ENCODE measurements at regions of chr12 and their contacts with region 1.

Region 1: GRCh38 chr12:124767066-124767821 is 96.4 kb downstream of the SCARB1 start:
- DNase-seq: peak; percentile 53
- ATAC-seq: peak; percentile 64
- H3K4me3 ChIP-seq: no peak overlapping the region
- H3K27ac ChIP-seq: peak overlapping the region; percentile 14; the same call in 1 of the 2 replicates
- H3K4me1 ChIP-seq: peaks cover 29% of the 10 kb centered on the region
- H3K27me3 ChIP-seq: no peaks in the 10 kb centered on the region
- CTCF ChIP-seq: peak; percentile 92
- POLR2A ChIP-seq: no peak
- RAD21 ChIP-seq: peak; percentile 96

Region 2: DNA sequence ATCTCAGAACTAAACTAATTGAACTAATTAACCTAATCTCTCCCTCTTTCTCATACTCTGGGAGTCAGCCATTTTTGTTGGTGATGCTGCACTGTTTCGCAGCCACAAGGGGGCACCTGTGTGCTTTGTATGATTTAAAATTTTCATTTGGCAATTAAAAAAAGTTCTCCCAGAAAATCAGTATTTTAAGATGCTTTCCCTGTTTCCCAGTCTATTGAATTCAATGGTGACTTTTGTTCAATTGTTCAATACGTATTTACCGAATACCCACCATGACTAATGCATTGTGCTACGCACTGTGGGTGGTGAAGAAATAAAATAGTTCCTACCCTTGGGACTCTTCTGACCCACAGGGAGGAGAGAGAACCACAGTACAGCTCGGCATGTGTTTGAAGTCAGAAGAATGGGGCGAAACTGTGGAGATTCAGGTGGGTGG is 730.6 kb before region 1 on chr12:
- CTCF ChIA-PET with region 1: interaction called, 7 read pairs
- POLR2A ChIA-PET with region 1: no interaction called
- dilution Hi-C with region 1: no loop called
- in situ Hi-C with region 1: loop called (anchors 5 kb)
- intact Hi-C with region 1: loop called (anchors 1 kb)
- DNase-seq: peak; percentile 44
- ATAC-seq: peak; percentile 62
- H3K4me3 ChIP-seq: no peak overlapping the region
- H3K27ac ChIP-seq: no peak overlapping the region
- H3K4me1 ChIP-seq: no peaks in the 10 kb centered on the region
- H3K27me3 ChIP-seq: no peaks in the 10 kb centered on the region
- CTCF ChIP-seq: peak; percentile 96
- POLR2A ChIP-seq: no peak
- RAD21 ChIP-seq: peak; percentile 90

Region 3: GRCh38 chr12:124369055-124369900 is 398.0 kb before region 1 on chr12:
- CTCF ChIA-PET with region 1: no interaction called
- POLR2A ChIA-PET with region 1: no interaction called
- dilution Hi-C with region 1: no loop called
- in situ Hi-C with region 1: no loop called
- intact Hi-C with region 1: loop called (anchors 2 kb)
- DNase-seq: peak; percentile 92
- ATAC-seq: peak; percentile 92
- H3K4me3 ChIP-seq: no peak overlapping the region
- H3K27ac ChIP-seq: peak overlapping the region; percentile 90
- H3K4me1 ChIP-seq: peaks cover 21% of the 10 kb centered on the region
- H3K27me3 ChIP-seq: no peaks in the 10 kb centered on the region
- CTCF ChIP-seq: peak; percentile 57
- POLR2A ChIP-seq: no peak
- RAD21 ChIP-seq: peak; percentile 53

Region 4: DNA sequence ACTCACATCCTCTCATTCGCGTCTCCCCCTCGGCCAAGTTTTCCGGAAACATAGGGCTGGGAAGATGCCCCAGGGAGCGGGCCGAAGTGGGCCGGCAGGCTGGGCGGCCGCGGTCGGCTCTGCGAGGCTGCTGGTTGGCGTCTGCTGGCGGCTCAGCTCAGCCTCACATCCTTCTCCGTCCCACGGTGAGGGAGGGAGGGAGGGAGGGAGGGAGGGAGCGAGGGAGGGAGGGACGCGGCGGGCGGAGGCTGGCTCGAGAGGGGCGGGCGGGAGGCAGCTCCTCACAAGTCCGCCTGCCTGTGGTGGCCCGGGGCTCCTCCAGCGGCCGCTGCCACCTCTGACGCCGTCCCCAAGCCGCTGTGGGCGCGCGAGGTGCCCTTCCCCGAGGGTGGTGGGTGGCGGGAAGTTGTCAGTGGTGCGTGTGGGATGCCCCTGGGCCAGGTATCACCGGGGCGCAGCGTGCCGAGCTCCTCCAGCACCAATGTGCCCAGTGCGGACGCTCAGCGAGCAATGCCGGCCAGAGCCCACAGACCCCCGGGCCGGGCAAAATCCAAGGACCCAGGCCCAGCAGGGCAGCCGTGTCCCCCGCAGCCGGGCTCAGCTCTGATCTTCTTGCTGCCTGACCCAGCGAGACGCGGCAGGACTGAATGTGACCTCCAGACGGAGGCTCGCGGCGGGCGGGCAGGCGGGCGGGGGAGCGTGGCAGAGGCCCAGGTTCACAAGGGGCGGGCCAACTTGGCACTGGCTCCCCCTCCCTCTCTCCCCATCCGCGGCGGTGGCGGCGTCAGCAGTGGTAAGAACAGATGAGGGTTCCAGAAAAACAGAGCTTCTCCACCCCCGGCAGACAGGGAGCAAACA is 378.3 kb before region 1 on chr12:
- CTCF ChIA-PET with region 1: no interaction called
- POLR2A ChIA-PET with region 1: no interaction called
- dilution Hi-C with region 1: no loop called
- in situ Hi-C with region 1: loop called (anchors 5 kb)
- intact Hi-C with region 1: loop called (anchors 5 kb)
- DNase-seq: peak; percentile 85
- ATAC-seq: peak; percentile 65
- H3K4me3 ChIP-seq: peak overlapping the region; percentile 97
- H3K27ac ChIP-seq: peak overlapping the region; percentile 98
- H3K4me1 ChIP-seq: peaks cover 62% of the 10 kb centered on the region
- H3K27me3 ChIP-seq: no peaks in the 10 kb centered on the region
- CTCF ChIP-seq: no peak
- POLR2A ChIP-seq: peak; percentile 94
- RAD21 ChIP-seq: peak; percentile 9; the same call in 1 of the 2 replicates

Region 5: DNA sequence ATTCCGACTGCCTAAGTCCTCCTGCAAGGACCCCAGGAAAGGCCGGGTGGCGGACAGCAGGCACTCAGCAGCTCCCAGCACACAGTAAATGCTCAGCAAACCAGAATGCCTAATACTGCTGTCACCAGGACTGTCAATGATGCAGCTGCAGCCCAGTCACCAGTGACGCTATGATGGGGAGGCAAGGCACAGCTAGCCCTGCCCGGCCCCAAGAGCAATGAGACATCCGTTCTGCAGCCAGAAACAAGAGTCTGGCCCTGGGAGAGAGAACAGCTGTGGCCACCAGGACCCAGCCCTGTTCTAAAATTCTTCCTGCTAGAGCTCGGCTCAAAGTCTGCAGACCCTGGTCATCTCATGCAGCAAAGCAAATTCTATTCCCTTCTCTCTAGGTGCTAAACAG is 269.6 kb before region 1 on chr12:
- CTCF ChIA-PET with region 1: interaction called, 3 read pairs
- POLR2A ChIA-PET with region 1: no interaction called
- dilution Hi-C with region 1: no loop called
- in situ Hi-C with region 1: no loop called
- intact Hi-C with region 1: loop called (anchors 5 kb)
- DNase-seq: peak; percentile 96
- ATAC-seq: peak; percentile 80
- H3K4me3 ChIP-seq: no peak overlapping the region
- H3K27ac ChIP-seq: peak overlapping the region; percentile 75
- H3K4me1 ChIP-seq: peaks cover 34% of the 10 kb centered on the region
- H3K27me3 ChIP-seq: no peaks in the 10 kb centered on the region
- CTCF ChIP-seq: 0 out of 2 replicates have a peak, but pooled peaks have one; percentile 4
- POLR2A ChIP-seq: peak; percentile 78
- RAD21 ChIP-seq: peak; percentile 34; the same call in 1 of the 2 replicates

Region 6: DNA sequence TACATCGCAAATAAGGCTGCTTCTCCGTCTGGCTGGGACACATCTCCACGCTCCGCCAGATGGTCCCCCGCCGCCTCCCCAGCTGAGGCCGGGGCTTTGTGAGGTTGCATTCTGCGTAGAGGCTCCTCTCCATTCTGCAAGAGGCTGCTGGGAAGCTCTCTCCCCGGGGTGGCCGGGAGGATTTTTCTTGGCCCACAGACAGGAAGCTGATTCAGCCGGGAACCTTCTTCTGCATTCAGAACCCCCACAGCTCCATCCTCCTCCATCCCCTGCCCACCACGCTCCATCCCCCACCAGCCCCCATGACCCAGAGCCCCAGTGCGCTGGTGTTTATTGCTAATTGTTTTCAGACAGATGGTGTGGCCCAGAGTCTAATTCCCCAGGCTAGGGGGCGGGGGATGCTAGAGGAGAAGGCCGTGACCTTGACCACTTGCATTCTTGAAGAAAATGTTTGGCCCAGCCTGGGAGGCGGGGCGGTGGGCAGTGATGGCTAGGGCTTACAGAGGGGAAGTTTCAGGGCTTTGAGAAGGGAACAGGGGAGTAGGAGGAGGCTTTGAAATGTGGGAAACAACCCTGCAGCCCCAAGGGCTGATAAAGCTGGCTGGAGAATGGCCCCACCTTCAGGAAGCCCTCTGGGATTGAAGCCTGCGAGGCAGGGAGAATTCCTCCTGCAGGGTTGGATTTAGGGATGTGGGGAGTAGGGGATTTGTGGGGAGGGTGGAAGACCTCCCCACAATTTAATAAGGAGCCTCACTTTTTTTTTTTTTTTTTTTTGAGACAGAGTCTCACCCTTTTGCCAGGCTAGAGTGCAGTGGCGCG is 111.3 kb before region 1 on chr12:
- CTCF ChIA-PET with region 1: interaction called, 3 read pairs
- POLR2A ChIA-PET with region 1: no interaction called
- dilution Hi-C with region 1: no loop called
- in situ Hi-C with region 1: no loop called
- intact Hi-C with region 1: loop called (anchors 10 kb)
- DNase-seq: peak; percentile 93
- ATAC-seq: peak; percentile 87
- H3K4me3 ChIP-seq: no peak overlapping the region
- H3K27ac ChIP-seq: peak overlapping the region; percentile 95
- H3K4me1 ChIP-seq: peaks cover 25% of the 10 kb centered on the region
- H3K27me3 ChIP-seq: no peaks in the 10 kb centered on the region
- CTCF ChIP-seq: 0 out of 2 replicates have a peak, but pooled peaks have one; percentile 21
- POLR2A ChIP-seq: 0 out of 2 replicates have a peak, but pooled peaks have one; percentile 24
- RAD21 ChIP-seq: peak; percentile 38; the same call in 1 of the 2 replicates

Region 7: GRCh38 chr12:124740691-124741137 is 26.5 kb before region 1 on chr12:
- CTCF ChIA-PET with region 1: interaction called, 13 read pairs
- POLR2A ChIA-PET with region 1: no interaction called
- dilution Hi-C with region 1: no loop called
- in situ Hi-C with region 1: no loop called
- intact Hi-C with region 1: no loop called
- DNase-seq: peak; percentile 66
- ATAC-seq: peak; percentile 21; the same call in 1 of the 2 replicates
- H3K4me3 ChIP-seq: no peak overlapping the region
- H3K27ac ChIP-seq: no peak overlapping the region
- H3K4me1 ChIP-seq: peaks cover 10% of the 10 kb centered on the region
- H3K27me3 ChIP-seq: no peaks in the 10 kb centered on the region
- CTCF ChIP-seq: 0 out of 2 replicates have a peak, but pooled peaks have one; percentile 19
- POLR2A ChIP-seq: no peak
- RAD21 ChIP-seq: no peak; the same call in 1 of the 2 replicates

Measured in IMR-90 (cell line).